ENCODE measurements at regions of chr10 and their contacts with region 1.

Region 1: DNA sequence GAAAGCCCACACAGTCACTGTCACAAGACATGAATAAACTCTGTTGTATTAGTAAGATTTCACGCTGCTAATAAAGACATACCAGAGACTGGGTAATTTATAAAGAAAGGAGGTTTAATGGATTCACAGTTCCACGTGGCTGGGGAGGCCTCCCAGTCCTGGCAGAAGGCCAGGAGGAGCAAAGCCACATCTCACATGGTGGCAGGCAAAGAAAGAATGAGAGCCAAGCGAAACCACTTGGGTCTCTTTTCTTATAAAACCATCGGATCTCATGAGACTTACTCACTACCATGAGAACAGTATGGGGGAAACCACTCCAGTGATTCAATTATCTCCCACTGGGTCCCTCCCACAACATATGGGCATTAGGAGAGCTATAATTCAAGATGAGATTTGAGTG is 110.2 kb downstream of the ST8SIA6 start:
- DNase-seq: no peak

Region 2: DNA sequence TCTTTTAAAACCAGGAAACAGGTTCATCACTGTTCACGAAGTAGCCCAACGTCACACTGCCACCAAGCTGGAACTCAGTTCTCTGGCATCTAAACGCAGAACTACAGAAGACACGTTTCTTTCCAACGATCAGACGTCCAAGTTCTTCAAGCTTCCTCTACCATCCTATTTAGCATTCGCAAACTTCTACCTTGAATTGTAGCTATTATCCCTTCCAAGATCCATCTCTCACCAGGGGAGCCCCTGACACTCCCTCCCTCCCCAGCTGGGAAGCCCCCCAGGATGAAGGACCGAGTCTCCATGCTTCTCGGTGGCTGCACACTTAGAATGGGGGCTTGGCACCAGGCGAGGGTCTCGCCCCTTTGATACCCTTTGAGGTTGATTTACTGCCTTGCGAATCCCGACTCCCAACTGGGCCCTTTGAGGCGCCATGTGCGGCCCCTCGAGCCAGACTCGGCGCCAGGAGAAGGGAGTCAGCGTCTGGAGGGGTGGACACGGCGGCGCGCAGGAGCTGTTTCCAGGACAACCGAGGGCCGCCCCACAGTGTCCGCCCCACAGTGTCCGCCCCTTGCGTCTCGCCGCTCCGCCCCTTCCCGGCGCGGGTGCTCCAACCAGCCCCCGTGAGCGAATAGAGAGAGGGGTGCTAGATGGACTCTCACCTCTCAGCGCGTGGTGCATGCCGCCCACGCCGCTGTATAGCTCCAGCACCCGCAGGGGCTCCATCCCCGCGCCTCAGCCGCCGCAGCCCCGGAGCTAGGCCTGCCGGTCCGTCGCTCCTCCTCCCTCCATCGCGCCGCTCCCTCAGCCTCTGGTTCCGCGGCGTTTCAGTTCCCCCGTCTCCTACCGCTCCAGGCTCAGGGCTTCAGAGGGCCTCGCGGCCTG is 143.1 kb before region 1 on chr10 and contains the start of gene TRDMT1:
- intact Hi-C with region 1: no loop called
- DNase-seq: peak; percentile 96
- total RNA-seq, gene TRDMT1: 9.5 to 11.0 TPM

Region 3: GRCh38 chr10:17265468-17265867 is 78.7 kb before region 1 on chr10:
- intact Hi-C with region 1: no loop called
- DNase-seq: no peak

Region 4: GRCh38 chr10:17354781-17355180 is 10.6 kb after region 1 on chr10:
- intact Hi-C with region 1: no loop called
- DNase-seq: no peak

Region 5: GRCh38 chr10:17747883-17748550 is 403.8 kb after region 1 on chr10:
- intact Hi-C with region 1: loop called in 1 of 2 experiments (anchors 5 kb)
- DNase-seq: no peak

Measured in posterior vena cava (tissue), 2 donors.